ENCODE measurements at regions of chr6 and their contacts with region 1.

Region 1: GRCh38 chr6:74574794-74575193 is 631.1 kb downstream of the COL12A1 start:
- DNase-seq: peak; percentile 49
- ATAC-seq: peak; percentile 91
- H3K4me3 ChIP-seq: no peak overlapping the region
- H3K27ac ChIP-seq: no peak overlapping the region
- H3K4me1 ChIP-seq: no peaks in the 10 kb centered on the region
- H3K27me3 ChIP-seq: no peaks in the 10 kb centered on the region
- CTCF ChIP-seq: peak; percentile 79
- EP300 ChIP-seq: no peak
- POLR2A ChIP-seq: no peak
- RAD21 ChIP-seq: peak; percentile 65

Region 2: GRCh38 chr6:74343804-74344203 is 231.0 kb before region 1 on chr6:
- CTCF ChIA-PET with region 1: interaction called, 9 read pairs
- POLR2A ChIA-PET with region 1: no interaction called
- in situ Hi-C with region 1: no loop called
- intact Hi-C with region 1: loop called (anchors 1 kb)
- DNase-seq: peak; percentile 4
- ATAC-seq: peak; percentile 76
- H3K4me3 ChIP-seq: no peak overlapping the region
- H3K27ac ChIP-seq: no peak overlapping the region
- H3K4me1 ChIP-seq: no peaks in the 10 kb centered on the region
- H3K27me3 ChIP-seq: no peaks in the 10 kb centered on the region
- CTCF ChIP-seq: peak; percentile 43
- EP300 ChIP-seq: no peak
- POLR2A ChIP-seq: no peak
- RAD21 ChIP-seq: no peak

Region 3: DNA sequence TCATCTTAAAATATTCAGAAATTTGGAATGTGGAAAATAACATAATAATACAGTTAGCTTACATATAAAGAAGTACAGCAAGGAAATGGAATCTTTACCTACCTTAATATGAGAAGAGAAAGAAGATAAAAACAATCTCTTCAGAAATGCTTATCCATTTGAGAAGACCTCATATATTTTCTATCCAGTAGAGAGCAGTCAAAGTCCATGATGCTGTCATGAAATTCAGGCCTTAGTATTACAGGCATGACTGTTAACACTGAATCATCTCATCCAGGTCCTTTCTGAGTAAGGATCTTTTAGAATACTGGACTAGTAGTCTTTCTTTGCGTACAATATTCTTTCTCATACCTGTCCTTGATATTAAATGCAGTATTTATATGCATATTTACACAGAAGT is 165.3 kb before region 1 on chr6:
- CTCF ChIA-PET with region 1: interaction called, 30 read pairs
- POLR2A ChIA-PET with region 1: no interaction called
- in situ Hi-C with region 1: no loop called
- intact Hi-C with region 1: loop called (anchors 1 kb)
- DNase-seq: peak; percentile 36
- ATAC-seq: peak; percentile 78
- H3K4me3 ChIP-seq: no peak overlapping the region
- H3K27ac ChIP-seq: no peak overlapping the region
- H3K4me1 ChIP-seq: no peaks in the 10 kb centered on the region
- H3K27me3 ChIP-seq: no peaks in the 10 kb centered on the region
- CTCF ChIP-seq: peak; percentile 64
- EP300 ChIP-seq: no peak
- POLR2A ChIP-seq: no peak
- RAD21 ChIP-seq: peak; percentile 61; the same call in 1 of the 2 replicates

Region 4: DNA sequence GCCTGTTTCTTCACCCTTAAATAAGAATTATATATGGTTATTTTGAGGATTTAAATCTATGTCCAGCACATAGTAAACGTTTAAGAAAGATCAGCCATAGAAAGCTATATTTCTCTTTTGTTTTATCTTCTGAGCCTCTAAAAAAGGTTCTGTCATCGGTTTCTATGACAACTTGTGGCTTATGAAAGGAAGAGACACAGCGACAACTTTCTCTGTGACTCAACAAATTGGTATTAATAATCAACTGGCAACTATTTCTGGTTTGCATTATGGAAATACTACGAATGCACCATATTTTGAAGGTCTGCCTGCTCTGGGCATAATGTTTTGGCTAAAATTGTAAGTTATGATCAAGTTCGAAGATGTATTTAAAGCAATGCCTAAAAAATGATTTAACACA is 127.8 kb before region 1 on chr6:
- CTCF ChIA-PET with region 1: no interaction called
- POLR2A ChIA-PET with region 1: no interaction called
- in situ Hi-C with region 1: loop called (anchors 25 kb)
- intact Hi-C with region 1: no loop called
- DNase-seq: no peak
- ATAC-seq: no peak
- H3K4me3 ChIP-seq: no peak overlapping the region
- H3K27ac ChIP-seq: no peak overlapping the region
- H3K4me1 ChIP-seq: no peaks in the 10 kb centered on the region
- H3K27me3 ChIP-seq: no peaks in the 10 kb centered on the region
- CTCF ChIP-seq: no peak
- EP300 ChIP-seq: no peak
- POLR2A ChIP-seq: no peak
- RAD21 ChIP-seq: no peak

Region 5: GRCh38 chr6:74519163-74519562 is 55.6 kb before region 1 on chr6:
- CTCF ChIA-PET with region 1: no interaction called
- POLR2A ChIA-PET with region 1: no interaction called
- in situ Hi-C with region 1: no loop called
- intact Hi-C with region 1: loop called (anchors 10 kb)
- DNase-seq: peak; percentile 5
- ATAC-seq: peak; percentile 70
- H3K4me3 ChIP-seq: no peak overlapping the region
- H3K27ac ChIP-seq: no peak overlapping the region
- H3K4me1 ChIP-seq: no peaks in the 10 kb centered on the region
- H3K27me3 ChIP-seq: no peaks in the 10 kb centered on the region
- CTCF ChIP-seq: no peak
- EP300 ChIP-seq: peak in 1 of 2 experiments; percentile 44; a peak in 1 of 4 replicates
- POLR2A ChIP-seq: no peak
- RAD21 ChIP-seq: no peak

Region 6: DNA sequence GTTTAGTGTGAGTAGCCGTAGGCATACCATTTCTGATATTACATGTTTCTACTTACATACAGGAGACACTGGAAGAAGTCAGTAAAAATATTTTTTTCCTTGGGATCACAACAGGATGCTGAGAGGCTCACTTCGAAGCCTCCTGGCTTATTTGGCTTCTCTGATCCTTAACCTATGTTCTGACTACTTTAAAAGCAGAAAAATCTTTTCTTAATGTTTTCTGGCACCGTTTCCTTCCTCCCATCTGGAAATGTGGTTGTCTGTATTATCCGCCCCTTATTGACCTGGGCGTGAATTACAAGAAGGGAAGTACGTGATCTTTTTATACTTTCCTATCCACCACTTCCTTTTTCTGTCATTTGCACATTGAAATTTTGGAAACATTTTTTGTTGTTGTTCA is 251.5 kb after region 1 on chr6:
- CTCF ChIA-PET with region 1: no interaction called
- POLR2A ChIA-PET with region 1: no interaction called
- in situ Hi-C with region 1: no loop called
- intact Hi-C with region 1: no loop called
- DNase-seq: no peak
- ATAC-seq: no peak
- H3K4me3 ChIP-seq: no peak overlapping the region
- H3K27ac ChIP-seq: no peak overlapping the region
- H3K4me1 ChIP-seq: no peaks in the 10 kb centered on the region
- H3K27me3 ChIP-seq: no peaks in the 10 kb centered on the region
- CTCF ChIP-seq: no peak
- EP300 ChIP-seq: no peak
- POLR2A ChIP-seq: no peak
- RAD21 ChIP-seq: no peak

Region 7: GRCh38 chr6:75130784-75131183 is 556.0 kb after region 1 on chr6:
- CTCF ChIA-PET with region 1: no interaction called
- POLR2A ChIA-PET with region 1: no interaction called
- in situ Hi-C with region 1: no loop called
- intact Hi-C with region 1: no loop called
- DNase-seq: no peak
- ATAC-seq: no peak
- H3K4me3 ChIP-seq: no peak overlapping the region
- H3K27ac ChIP-seq: no peak overlapping the region
- H3K4me1 ChIP-seq: no peaks in the 10 kb centered on the region
- H3K27me3 ChIP-seq: no peaks in the 10 kb centered on the region
- CTCF ChIP-seq: no peak
- EP300 ChIP-seq: no peak
- POLR2A ChIP-seq: no peak
- RAD21 ChIP-seq: no peak

Measured in HepG2 (cell line).